ENCODE measurements at regions of chr12 and their contacts with region 1.

Region 1: DNA sequence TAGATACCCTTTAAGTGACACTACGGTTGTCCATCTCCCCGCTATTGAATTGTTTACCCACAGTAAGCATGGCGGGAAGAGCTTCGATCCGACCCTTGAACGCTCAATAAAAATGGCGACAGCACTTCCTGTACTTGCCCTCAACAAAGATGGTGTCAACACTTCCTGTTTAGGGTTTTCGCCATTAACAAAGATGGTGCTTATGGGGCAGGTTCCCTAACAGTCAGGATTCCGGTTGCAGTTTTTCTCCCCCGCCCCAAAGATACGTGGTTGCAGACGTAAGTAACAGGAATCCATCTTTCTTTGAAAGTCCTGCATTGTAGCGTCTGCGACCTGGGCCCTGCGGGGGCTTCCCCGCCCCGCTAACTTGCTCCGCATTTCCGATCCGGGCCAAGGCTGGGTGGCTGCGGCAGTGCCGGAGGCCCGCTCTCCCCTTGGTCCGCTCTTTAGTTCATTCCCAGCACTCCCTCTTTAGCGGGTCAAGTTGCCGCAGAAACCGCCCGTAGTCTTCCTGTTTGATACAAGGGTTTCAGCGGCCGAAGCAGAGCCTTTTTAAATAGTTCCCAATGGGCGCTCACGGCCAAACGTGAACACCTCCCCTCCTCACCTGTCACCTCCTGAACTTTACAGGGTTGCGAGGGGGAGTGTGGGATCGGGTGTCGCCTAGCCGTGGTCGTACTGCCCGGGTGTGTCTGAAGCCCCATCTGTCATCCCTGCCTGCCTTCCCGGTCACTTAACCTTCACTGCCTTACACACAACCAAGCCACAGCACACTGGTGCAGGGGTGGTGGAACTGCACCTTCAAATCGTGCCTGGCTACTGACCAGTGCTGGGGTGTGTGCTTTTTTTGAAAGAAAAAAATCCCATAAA is at the start of gene CRADD:
- DNase-seq: peak; percentile 93
- H3K4me3 ChIP-seq: peak within 1 kb of the TSS; percentile 66 to 89
- H3K27ac ChIP-seq: peak within 1 kb of the TSS; percentile 96 to 99
- H3K4me1 ChIP-seq: peaks cover 16% of the 10 kb centered on the region
- H3K27me3 ChIP-seq: no peaks in the 10 kb centered on the region
- CTCF ChIP-seq: no peak
- POLR2A ChIP-seq: peak; percentile 62
- total RNA-seq, gene CRADD: 46.0 to 53.0 TPM

Region 2: DNA sequence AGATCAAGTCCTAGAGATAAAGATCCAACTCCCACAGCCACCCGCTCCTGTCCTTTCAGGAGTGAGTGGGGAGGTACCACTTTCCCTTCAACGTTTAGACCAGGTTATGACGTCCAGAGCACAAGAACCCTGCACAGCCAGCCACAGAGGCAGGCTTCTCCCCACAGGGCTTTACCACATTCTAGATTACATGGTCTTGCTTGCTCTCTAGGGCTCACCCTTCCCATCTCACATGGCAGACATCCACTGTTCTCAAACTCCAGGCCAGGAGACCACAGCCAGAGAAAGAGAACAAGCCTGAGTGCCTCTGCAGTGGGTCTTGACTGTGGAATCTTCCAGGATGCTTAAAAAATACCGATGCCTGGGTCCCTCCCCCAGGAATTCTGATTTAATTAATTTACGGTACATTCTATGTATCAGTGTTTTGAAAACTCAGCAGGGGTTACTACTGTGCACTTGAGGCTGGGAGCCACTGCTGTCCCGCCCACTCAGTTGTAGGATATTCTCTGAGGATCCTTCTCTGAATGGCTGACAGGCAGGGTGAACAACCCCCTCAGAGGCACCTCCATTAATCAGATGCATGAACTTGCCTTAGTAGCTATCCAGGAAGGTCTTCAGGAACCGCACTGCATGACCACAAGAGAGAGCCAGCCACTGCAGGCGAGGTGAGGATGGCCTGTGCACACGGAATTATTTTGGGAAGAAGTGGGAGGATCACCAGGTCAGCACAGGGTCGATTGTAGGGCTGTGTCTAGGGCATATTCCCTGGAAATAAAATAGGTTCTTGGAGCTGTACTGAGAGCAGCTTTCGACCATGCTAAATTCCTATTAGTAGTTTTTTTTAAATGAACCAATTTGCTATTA is 126.5 kb before region 1 on chr12:
- intact Hi-C with region 1: no loop called
- DNase-seq: no peak
- H3K4me3 ChIP-seq: no peak overlapping the region
- H3K27ac ChIP-seq: no peak overlapping the region
- H3K4me1 ChIP-seq: no peaks in the 10 kb centered on the region
- H3K27me3 ChIP-seq: no peaks in the 10 kb centered on the region
- CTCF ChIP-seq: no peak
- POLR2A ChIP-seq: no peak

Region 3: DNA sequence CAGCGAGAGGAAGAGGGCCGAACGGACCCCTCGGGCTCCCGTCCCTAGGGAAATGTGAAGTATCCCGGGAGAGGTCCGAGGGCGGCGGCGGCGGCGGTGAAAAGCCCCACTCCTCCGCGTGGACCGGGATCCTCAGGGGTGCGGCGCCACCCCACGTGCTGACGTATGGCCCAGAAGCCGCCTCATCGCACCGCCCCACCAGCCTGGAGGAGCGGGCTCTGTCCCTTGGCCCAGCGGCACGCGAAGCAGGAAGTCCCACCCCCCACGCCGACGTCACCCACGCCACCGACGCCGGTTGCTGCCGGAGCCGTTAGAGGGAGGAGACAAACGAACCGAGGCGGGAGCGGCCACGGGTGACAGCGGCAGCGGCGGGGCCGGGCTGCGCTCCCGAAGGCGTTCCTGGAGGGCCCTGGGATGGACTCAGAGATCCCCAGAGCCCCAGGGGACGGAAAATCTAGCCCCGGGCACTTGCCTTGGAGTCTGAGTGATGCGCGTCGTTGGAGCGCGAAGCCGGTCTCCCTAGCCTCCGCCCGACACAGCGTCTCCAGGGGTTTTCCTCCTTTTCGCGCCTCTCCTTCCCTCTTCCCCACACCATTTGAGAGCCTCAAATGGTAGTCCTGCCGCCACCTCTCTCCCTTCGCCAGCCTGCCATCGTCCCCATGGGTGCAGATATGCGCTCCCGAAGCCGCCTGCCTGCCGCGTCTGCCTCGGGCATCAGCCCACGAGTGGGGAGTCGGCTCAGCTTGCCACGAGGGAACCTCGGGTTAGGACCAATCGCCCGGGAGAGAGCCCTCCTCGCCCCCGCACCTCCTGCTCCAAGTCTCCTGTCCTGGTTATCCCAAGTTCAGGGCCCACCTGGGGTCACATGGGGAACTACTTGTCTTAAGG is 782.5 kb after region 1 on chr12 and contains the start of gene CEP83:
- intact Hi-C with region 1: loop called (anchors 5 kb)
- DNase-seq: peak; percentile 98
- H3K4me3 ChIP-seq: peak within 1 kb of the TSS; percentile 82 to 87
- H3K27ac ChIP-seq: peak within 1 kb of the TSS; percentile 92 to 93
- H3K4me1 ChIP-seq: no peaks in the 10 kb centered on the region
- H3K27me3 ChIP-seq: no peaks in the 10 kb centered on the region
- CTCF ChIP-seq: no peak
- POLR2A ChIP-seq: peak; percentile 91
- total RNA-seq, gene CEP83: 48.4 to 64.1 TPM